HepG2 (cell line): ENCODE measurements at regions of chrX and their contacts with region 1.

Region 1: GRCh38 chrX:30822068-30822681 is 66.9 kb downstream of the TAB3 start:
- DNase-seq: peak; percentile 18
- ATAC-seq: peak; percentile 86
- H3K4me3 ChIP-seq: no peak overlapping the region
- H3K27ac ChIP-seq: no peak overlapping the region
- H3K4me1 ChIP-seq: 0 out of 2 replicates have a peak, but pooled peaks cover 9% of the 10 kb centered on the region
- H3K27me3 ChIP-seq: no peaks in the 10 kb centered on the region
- CTCF ChIP-seq: peak; percentile 68
- EP300 ChIP-seq: no peak
- POLR2A ChIP-seq: no peak
- RAD21 ChIP-seq: no peak

Region 2: GRCh38 chrX:30153881-30154260 is 668.3 kb before region 1 on chrX:
- CTCF ChIA-PET with region 1: no interaction called
- POLR2A ChIA-PET with region 1: no interaction called
- in situ Hi-C with region 1: no loop called
- intact Hi-C with region 1: no loop called
- DNase-seq: no peak
- ATAC-seq: no peak
- H3K4me3 ChIP-seq: no peak overlapping the region
- H3K27ac ChIP-seq: no peak overlapping the region
- H3K4me1 ChIP-seq: no peaks in the 10 kb centered on the region
- H3K27me3 ChIP-seq: no peaks in the 10 kb centered on the region
- CTCF ChIP-seq: no peak
- EP300 ChIP-seq: no peak
- POLR2A ChIP-seq: no peak
- RAD21 ChIP-seq: no peak

Region 3: GRCh38 chrX:30735839-30736238 is 86.3 kb before region 1 on chrX:
- CTCF ChIA-PET with region 1: no interaction called
- POLR2A ChIA-PET with region 1: no interaction called
- in situ Hi-C with region 1: loop called (anchors 10 kb)
- intact Hi-C with region 1: loop called (anchors 2 kb)
- DNase-seq: peak; percentile 53
- ATAC-seq: peak; percentile 59
- H3K4me3 ChIP-seq: no peak overlapping the region
- H3K27ac ChIP-seq: no peak overlapping the region
- H3K4me1 ChIP-seq: no peaks in the 10 kb centered on the region
- H3K27me3 ChIP-seq: no peaks in the 10 kb centered on the region
- CTCF ChIP-seq: peak; percentile 75
- EP300 ChIP-seq: no peak
- POLR2A ChIP-seq: no peak
- RAD21 ChIP-seq: 0 out of 2 replicates have a peak, but pooled peaks have one; percentile 42